Heart right ventricle (tissue), 16 donors: ENCODE measurements at regions of chrX and their contacts with region 1.

Region 1: DNA sequence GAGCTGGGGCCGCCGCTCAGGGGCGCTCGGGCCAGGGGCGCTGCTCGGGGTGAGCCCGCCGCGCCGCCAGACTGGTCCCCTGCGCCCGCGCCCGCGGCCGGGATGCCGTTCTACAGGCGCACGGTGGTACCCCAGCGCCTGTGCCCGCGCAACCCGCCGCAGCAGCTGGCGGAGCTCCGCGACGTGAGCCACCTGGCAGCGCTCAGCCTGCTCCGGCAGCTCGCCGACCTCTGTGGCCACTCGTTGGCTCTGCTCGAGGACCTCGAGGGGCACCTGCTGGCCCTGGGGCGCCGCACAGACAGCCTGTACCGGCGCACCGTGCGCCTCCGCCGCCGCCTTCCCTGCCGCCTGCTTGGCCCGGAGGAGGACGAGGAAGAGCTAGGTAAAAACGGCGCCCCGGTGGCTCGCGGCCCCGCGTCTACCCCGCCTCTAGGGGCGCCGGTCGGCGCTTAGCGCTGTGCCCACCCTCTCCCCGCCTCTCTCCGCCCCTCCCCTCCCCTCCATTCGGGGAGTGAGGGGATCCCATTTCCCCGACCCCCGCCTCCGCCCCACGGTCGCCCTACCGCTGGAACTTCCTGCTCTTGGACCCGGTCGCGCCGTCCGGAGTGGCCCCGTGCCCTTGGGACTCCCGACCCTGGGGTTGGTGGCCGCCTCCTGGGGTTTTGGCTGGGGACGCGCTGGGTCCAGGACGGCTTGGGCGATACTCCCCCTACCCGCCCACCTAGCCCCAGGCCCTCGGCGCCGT is 513 bp downstream of the NHSL2 start:
- DNase-seq: peak in 1 of 2 donors; percentile 15
- ATAC-seq: peak; percentile 19 to 75 (median 60)
- H3K4me3 ChIP-seq: peak overlapping the region; percentile 3 to 55 (median 48)
- H3K27ac ChIP-seq: peak overlapping the region in 8 of 10 donors; percentile 17 to 72 (median 44)
- H3K4me1 ChIP-seq: peaks cover 0 to 5% (median 0%) of the 10 kb centered on the region in 9 donors
- H3K27me3 ChIP-seq: peaks cover 0 to 99% (median 13%) of the 10 kb centered on the region in 7 donors
- CTCF ChIP-seq: peak in 6 of 9 donors; percentile 11 to 40 (median 28)

Region 2: DNA sequence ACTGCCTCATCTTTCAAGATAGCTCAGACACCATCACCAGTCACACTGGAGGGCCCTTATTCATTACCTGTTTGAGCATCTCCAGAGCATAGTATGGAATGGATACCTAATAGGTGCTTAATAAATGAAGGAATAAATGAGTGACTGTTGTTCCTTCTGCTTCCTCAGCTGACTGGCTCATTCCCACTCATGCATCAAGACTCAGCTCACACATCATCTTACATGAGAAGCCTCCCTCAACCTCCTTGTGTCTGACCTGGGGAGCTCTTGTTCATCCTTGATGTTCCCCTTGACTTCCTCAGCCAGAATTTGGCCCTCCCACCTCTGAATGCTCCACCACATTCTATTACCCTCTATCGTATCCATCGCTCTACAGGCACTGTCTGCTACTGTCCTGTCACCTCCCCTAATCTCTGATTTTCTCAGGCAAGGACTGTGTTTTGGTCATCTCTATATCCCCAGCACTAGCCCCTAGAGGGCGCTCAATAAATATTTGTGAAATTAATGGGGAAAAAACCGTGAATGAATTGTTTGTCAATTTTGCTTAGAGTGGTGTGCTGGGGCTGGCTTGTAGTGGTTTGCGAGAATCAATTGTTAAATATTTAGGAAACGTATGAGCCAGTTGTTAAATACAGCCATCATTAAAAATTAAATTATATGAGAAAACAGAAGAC is 87.8 kb after region 1 on chrX:
- intact Hi-C with region 1: loop called in 2 of 10 experiments (anchors 5 to 10 kb)
- DNase-seq: peak in 1 of 2 donors; percentile 19
- ATAC-seq: peak in 1 of 8 donors; percentile 45
- H3K4me3 ChIP-seq: no peak overlapping the region
- H3K27ac ChIP-seq: no peak overlapping the region
- H3K4me1 ChIP-seq: peaks cover 0 to 20% (median 6%) of the 10 kb centered on the region in 9 donors
- H3K27me3 ChIP-seq: peaks cover 0 to 48% (median 0%) of the 10 kb centered on the region in 7 donors
- CTCF ChIP-seq: peak in 8 of 9 donors; percentile 21 to 68 (median 60)

Region 3: GRCh38 chrX:72297953-72298730 is 387.0 kb after region 1 on chrX:
- intact Hi-C with region 1: no loop called
- DNase-seq: no peak
- ATAC-seq: peak in 1 of 8 donors; percentile 37
- H3K4me3 ChIP-seq: no peak overlapping the region
- H3K27ac ChIP-seq: no peak overlapping the region
- H3K4me1 ChIP-seq: no peaks in the 10 kb centered on the region
- H3K27me3 ChIP-seq: peaks cover 0 to 95% (median 0%) of the 10 kb centered on the region in 7 donors
- CTCF ChIP-seq: peak in 4 of 9 donors; percentile 7 to 34 (median 31)

Region 4: DNA sequence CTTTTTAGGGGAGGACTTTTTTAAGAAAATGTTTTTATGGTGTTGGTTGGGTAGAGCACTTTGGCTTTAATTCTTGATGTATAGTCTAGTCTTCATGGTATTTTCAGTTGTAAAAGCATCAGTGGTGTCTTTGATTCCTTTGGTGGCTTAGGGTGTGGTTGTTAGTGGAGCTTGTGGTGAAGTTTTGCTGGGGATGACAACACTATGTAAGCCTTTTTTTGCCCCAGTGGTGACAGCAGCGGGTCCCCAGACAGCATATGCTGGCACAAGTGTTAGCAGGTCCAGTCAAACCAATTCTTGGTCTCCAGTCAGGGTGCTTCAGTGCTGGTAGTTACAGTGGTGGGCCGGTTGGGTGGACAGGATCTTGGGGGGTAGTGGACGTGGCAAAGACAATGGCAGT is 1703.9 kb after region 1 on chrX:
- intact Hi-C with region 1: loop called in 1 of 10 experiments (anchors 10 kb)
- DNase-seq: no peak
- ATAC-seq: no peak
- H3K4me3 ChIP-seq: no peak overlapping the region
- H3K27ac ChIP-seq: no peak overlapping the region
- H3K4me1 ChIP-seq: no peaks in the 10 kb centered on the region
- H3K27me3 ChIP-seq: no peaks in the 10 kb centered on the region
- CTCF ChIP-seq: no peak